ENCODE measurements at regions of chr6 and their contacts with region 1.

Region 1: DNA sequence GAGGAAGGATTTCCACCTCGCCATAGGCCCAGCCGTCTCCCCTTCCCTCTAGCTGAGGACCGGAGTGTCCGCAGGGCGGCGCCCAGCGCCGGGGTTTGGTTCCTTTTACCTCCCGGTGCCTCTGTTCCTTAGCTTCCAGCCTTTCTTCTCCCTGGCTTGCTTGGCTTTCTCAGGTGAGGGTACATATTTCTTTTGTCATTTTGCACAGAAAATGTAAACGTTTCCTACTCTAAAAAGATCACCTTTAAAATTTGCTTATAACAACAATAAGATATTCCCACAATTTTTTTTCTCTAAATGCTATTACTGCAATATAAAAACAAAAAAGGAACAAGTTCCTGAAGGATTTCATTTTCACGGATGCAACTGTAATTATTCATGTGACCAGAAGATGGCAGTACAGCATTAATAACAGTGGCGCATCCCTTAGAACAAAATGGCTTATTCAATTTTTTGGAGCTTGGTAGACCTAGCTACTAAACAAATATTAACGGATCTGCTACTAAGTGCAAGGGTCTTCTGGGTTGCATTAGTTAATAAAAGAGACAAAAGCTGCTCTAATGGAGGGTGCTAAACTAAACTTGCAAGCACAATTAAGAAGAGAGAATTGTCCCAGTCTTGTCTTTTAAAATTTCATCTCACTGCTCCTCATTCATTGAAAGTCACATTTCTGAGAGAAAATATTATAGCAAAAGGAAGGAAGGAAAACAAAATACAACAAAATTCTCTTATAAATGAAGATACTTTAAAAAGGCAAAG is 172.9 kb downstream of the ADGRG6 start:
- DNase-seq: no peak
- H3K4me3 Mint-ChIP-seq: no peak overlapping the region
- H3K27ac Mint-ChIP-seq: no peak overlapping the region
- H3K4me1 Mint-ChIP-seq: peaks cover 3% of the 10 kb centered on the region
- H3K27me3 Mint-ChIP-seq: peaks cover 8% of the 10 kb centered on the region

Region 2: GRCh38 chr6:142566628-142567396 is 92.1 kb after region 1 on chr6:
- intact Hi-C with region 1: loop called (anchors 10 kb)
- DNase-seq: peak; percentile 14
- H3K4me3 Mint-ChIP-seq: no peak overlapping the region
- H3K27ac Mint-ChIP-seq: no peak overlapping the region
- H3K4me1 Mint-ChIP-seq: peaks cover 19% of the 10 kb centered on the region
- H3K27me3 Mint-ChIP-seq: no peaks in the 10 kb centered on the region

Region 3: GRCh38 chr6:143337201-143337949 is 862.7 kb after region 1 on chr6:
- intact Hi-C with region 1: loop called (anchors 2 kb)
- DNase-seq: peak; percentile 24
- H3K4me3 Mint-ChIP-seq: no peak overlapping the region
- H3K27ac Mint-ChIP-seq: no peak overlapping the region
- H3K4me1 Mint-ChIP-seq: peaks cover 9% of the 10 kb centered on the region
- H3K27me3 Mint-ChIP-seq: no peaks in the 10 kb centered on the region